ENCODE measurements at regions of chr22 and their contacts with region 1.

Region 1: GRCh38 chr22:37316875-37317371 is 34.6 kb downstream of the CYTH4 start:
- DNase-seq: peak; percentile 86

Region 2: DNA sequence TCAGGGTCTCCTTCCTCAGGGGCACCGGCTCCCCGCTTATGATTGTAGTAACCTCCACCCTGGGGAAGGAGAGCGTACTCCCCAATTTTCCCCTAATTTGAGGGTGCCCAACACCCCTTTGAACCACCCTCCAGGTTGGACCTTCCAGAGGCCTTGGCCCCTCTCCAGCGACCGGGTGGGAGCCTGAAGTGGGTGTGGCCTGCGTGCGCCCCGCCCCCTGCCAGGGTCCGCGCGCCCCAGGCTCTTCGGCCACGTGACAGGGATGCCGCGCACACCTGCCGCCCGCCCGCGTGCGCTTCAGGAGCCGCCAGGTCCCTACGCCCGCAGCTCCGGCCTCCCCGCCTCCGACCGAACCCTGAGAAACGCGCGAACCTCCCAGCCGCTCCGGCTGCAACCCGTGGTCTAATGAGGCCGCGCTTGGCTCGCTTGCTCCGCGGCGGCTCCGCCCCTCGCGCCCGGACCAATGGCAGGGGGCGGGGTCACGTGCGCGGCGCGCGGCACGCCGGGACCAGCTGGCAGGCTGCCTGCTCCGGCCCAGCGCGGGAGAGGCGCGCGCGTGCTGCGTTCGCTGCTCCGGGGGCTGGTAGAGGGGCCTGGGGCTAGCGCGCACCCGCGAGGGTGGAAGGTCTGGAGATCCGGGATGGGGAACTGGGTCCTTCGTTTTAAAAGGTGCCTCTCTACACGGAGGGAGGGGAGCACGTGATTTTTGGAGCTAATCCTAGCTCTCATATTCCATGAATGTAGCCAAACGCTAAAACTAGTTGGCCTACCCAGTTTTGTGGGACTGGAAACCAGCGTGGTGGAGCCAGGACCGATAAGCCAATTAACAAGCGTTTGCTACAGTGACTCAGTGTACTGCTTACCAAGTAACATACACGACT is 810.0 kb before region 1 on chr22 and contains the start of gene FOXRED2:
- intact Hi-C with region 1: no loop called
- DNase-seq: peak; percentile 95
- total RNA-seq, gene FOXRED2: 3.8 TPM

Region 3: DNA sequence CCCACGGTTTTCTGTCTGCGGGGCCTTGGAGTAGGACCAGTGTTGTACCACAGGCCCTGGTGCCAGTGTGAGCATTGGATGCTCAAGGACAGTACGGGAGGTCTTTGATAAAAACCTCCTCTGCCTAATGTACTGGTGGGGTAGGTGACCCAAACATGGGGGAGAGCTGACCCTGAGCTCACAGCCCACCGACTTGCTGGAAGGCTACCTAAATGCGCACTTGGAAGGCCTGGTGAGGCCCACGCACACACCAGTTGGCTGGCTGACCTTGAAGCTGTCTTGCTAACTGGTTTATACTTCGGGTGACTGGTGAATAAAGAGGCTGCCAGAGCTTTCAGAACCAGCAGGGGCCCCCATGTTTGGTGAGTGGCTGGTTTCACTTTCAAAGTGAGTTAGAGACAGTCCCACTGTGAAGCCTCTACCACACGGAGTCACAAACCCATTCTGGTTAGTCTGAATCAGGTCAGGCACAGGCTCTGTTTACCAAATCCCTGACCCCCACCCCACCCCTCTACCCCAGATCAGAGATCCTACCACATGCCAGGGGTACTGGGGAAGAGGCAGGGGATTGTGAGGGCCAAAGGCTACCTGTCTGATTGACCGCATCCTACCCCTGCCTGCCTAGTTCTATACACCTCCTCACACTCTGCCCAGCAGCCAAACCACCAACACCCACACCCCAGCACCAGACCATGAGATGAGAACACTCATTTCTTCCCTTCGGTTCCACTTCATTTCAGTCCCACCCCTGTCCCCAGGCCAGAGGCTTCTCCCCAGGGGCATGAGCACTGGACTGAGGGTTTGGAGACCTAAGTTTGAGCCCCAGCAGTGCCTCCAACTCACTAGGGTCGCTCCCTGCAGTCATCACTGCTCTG is 154.5 kb before region 1 on chr22:
- intact Hi-C with region 1: no loop called
- DNase-seq: no peak

Region 4: DNA sequence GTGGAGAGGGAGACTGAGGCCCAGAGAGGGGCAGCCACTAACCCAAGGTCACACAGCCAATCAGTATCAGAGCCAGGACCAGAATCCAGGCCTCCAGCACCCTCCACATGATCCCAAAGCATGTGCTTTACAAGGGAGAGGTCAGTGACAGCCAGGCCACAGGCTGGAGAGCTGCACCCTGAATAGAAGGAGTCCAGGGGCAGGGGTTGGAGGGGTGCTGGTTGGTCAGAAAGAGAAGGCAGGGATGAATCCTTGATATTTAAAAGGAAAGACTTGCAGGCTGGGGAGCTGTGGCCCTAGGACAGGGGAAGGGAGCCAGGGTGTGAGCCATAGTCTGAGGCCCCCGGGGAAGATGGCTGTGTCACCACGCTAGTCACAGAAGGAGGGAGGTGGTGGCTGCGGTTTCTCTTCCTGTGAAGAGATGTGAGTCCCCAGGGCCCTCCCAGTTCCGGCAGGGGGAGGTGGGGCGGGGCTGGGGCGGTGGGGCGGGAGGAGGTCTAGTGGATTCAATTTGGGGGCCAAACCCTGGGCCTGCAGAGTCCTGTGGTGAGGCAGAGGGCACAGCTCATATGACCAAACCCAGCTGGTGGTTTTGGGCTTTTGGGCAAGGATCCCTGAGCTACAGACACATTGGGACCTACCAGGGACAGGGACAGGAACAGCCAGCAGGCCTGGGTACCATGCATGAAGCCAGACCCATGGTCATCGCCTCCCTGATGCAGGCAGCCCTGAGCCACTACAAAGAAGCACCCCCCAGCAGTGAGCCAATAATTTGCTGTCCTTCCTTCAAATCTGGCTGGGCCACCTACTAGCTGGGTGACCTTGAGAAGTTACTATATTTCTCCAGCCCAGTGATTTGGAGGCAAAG is 86.9 kb before region 1 on chr22:
- intact Hi-C with region 1: no loop called
- DNase-seq: peak; percentile 90

Region 5: GRCh38 chr22:37428649-37429586 is 112.0 kb after region 1 on chr22:
- intact Hi-C with region 1: loop called (anchors 2 kb)
- DNase-seq: no peak

Region 6: GRCh38 chr22:37457093-37457893 is 140.4 kb after region 1 on chr22:
- intact Hi-C with region 1: loop called (anchors 2 kb)
- DNase-seq: peak; percentile 88